PC-9 (cell line): ENCODE measurements at regions of chr14 and their contacts with region 1.

Region 1: GRCh38 chr14:74176400-74176793 is 62.9 kb upstream of the VSX2 start:
- DNase-seq: no peak
- H3K4me3 ChIP-seq: no peak overlapping the region
- H3K27ac ChIP-seq: no peak overlapping the region
- H3K4me1 ChIP-seq: no peaks in the 10 kb centered on the region
- H3K27me3 ChIP-seq: no peaks in the 10 kb centered on the region
- CTCF ChIP-seq: no peak

Region 2: GRCh38 chr14:74217672-74218448 is 41.5 kb after region 1 on chr14:
- CTCF ChIA-PET with region 1: interaction called, 12 read pairs
- POLR2A ChIA-PET with region 1: no interaction called
- intact Hi-C with region 1: no loop called
- DNase-seq: peak; percentile 58 to 92
- H3K4me3 ChIP-seq: peak overlapping the region; percentile 10; the same call in 1 of the 2 replicates
- H3K27ac ChIP-seq: no peak overlapping the region
- H3K4me1 ChIP-seq: no peaks in the 10 kb centered on the region
- H3K27me3 ChIP-seq: peaks cover 40% of the 10 kb centered on the region
- CTCF ChIP-seq: peak; percentile 96

Region 3: GRCh38 chr14:74309125-74310022 is 133.0 kb after region 1 on chr14:
- CTCF ChIA-PET with region 1: interaction called, 11 read pairs
- POLR2A ChIA-PET with region 1: no interaction called
- intact Hi-C with region 1: no loop called
- DNase-seq: no peak
- H3K4me3 ChIP-seq: no peak overlapping the region
- H3K27ac ChIP-seq: no peak overlapping the region
- H3K4me1 ChIP-seq: 0 out of 2 replicates have a peak, but pooled peaks cover 5% of the 10 kb centered on the region
- H3K27me3 ChIP-seq: no peaks in the 10 kb centered on the region
- CTCF ChIP-seq: no peak